PC-9 (cell line): ENCODE measurements at regions of chr6 and their contacts with region 1.

Region 1: GRCh38 chr6:55239099-55239498 is 64.8 kb downstream of the HCRTR2 start:
- DNase-seq: peak in 1 of 2 experiments; percentile 15
- H3K4me3 ChIP-seq: no peak overlapping the region
- H3K27ac ChIP-seq: no peak overlapping the region
- H3K4me1 ChIP-seq: no peaks in the 10 kb centered on the region
- H3K27me3 ChIP-seq: no peaks in the 10 kb centered on the region
- CTCF ChIP-seq: no peak

Region 2: DNA sequence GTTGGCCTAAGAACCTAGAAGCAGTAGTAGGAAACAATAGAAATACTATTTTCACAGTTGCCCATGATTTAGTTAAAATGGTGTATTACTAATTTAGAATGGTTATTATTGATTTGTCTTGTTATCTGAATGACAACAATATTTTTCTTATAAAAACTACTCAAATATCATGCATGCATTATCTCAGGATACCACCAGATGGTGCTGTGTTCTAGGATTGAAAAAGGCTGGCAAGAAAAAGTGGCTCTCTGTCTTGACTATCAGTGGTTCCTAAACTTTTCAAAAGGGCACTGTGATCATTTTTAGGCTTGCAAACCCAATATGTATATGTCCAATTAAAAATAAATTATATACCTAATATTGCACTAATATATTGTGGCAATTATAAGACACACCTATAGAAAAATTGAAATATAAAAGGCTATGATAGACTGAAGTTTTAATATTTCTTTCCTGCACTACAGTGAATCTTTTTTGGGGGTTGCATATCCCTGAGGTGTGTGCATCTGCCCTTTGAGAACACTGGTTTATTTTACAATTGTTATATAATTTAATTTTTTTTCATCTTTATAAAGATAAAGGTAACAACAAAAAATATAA is 1259.5 kb before region 1 on chr6:
- CTCF ChIA-PET with region 1: no interaction called
- POLR2A ChIA-PET with region 1: no interaction called
- intact Hi-C with region 1: loop called (anchors 2 kb)
- DNase-seq: peak in 1 of 2 experiments; percentile 52
- H3K4me3 ChIP-seq: no peak overlapping the region
- H3K27ac ChIP-seq: no peak overlapping the region
- H3K4me1 ChIP-seq: peaks cover 8% of the 10 kb centered on the region
- H3K27me3 ChIP-seq: no peaks in the 10 kb centered on the region
- CTCF ChIP-seq: peak; percentile 94

Region 3: DNA sequence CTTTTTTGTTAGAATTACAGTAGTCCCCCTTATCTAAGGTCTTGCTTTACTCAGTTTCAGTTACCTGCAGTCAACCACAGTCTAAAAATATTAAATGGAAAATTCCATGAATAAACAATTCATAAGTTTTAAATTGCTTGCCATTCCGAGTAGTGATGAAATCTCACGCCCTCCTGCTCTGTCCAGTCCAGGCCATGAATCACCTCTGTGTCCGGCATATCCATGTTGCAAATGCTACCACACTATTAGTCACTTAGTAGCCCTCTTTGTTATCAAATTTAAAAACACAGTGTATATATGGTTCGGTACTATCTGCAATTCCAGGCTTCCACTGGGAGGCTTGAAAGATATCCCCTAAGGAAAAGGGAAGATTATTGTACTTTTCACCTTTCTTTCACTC is 557.1 kb before region 1 on chr6:
- CTCF ChIA-PET with region 1: interaction called, 10 read pairs
- POLR2A ChIA-PET with region 1: no interaction called
- intact Hi-C with region 1: no loop called
- DNase-seq: peak; percentile 18 to 76
- H3K4me3 ChIP-seq: no peak overlapping the region
- H3K27ac ChIP-seq: peak overlapping the region; percentile 47
- H3K4me1 ChIP-seq: peaks cover 10% of the 10 kb centered on the region
- H3K27me3 ChIP-seq: no peaks in the 10 kb centered on the region
- CTCF ChIP-seq: no peak

Region 4: GRCh38 chr6:54697424-54697823 is 541.7 kb before region 1 on chr6:
- CTCF ChIA-PET with region 1: no interaction called
- POLR2A ChIA-PET with region 1: no interaction called
- intact Hi-C with region 1: loop called (anchors 10 kb)
- DNase-seq: no peak
- H3K4me3 ChIP-seq: no peak overlapping the region
- H3K27ac ChIP-seq: no peak overlapping the region
- H3K4me1 ChIP-seq: peaks cover 22% of the 10 kb centered on the region
- H3K27me3 ChIP-seq: no peaks in the 10 kb centered on the region
- CTCF ChIP-seq: no peak; the same call in 1 of the 2 replicates

Region 5: GRCh38 chr6:54958446-54958845 is 280.7 kb before region 1 on chr6:
- CTCF ChIA-PET with region 1: no interaction called
- POLR2A ChIA-PET with region 1: no interaction called
- intact Hi-C with region 1: no loop called
- DNase-seq: no peak
- H3K4me3 ChIP-seq: no peak overlapping the region
- H3K27ac ChIP-seq: no peak overlapping the region
- H3K4me1 ChIP-seq: no peaks in the 10 kb centered on the region
- H3K27me3 ChIP-seq: no peaks in the 10 kb centered on the region
- CTCF ChIP-seq: no peak